HCT116 (cell line): ENCODE measurements at regions of chr7 and their contacts with region 1.

Region 1: GRCh38 chr7:78863281-78863680 is 590.2 kb downstream of the MAGI2 start:
- DNase-seq: no peak
- ATAC-seq: no peak
- H3K4me3 ChIP-seq: no peak overlapping the region
- H3K27ac ChIP-seq: no peak overlapping the region
- H3K4me1 ChIP-seq: no peaks in the 10 kb centered on the region
- H3K27me3 ChIP-seq: no peaks in the 10 kb centered on the region
- CTCF ChIP-seq: no peak
- POLR2A ChIP-seq: no peak
- RAD21 ChIP-seq: no peak

Region 2: DNA sequence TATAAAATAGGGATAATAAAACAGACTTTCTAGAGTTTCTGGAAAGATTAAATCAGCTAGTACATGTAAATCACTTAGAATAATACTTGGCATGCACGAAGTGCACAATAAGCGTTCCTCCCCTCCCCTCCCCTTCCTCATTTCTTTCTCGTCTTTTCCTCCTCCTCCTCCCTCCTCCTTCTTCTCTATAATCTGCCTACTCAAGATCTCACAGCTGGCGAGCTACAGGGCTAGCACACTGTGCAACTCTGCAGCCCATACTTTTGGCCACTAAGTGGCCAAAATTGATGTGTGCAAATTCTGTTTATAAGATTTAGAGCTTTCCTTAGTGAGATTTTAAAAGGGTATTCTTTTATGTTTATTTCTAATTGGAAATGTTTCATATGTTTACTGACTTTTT is 499.4 kb before region 1 on chr7:
- CTCF ChIA-PET with region 1: no interaction called
- POLR2A ChIA-PET with region 1: no interaction called
- RAD21 ChIA-PET with region 1: no interaction called
- intact Hi-C with region 1: loop called (anchors 5 kb)
- DNase-seq: no peak
- ATAC-seq: no peak
- H3K4me3 ChIP-seq: no peak overlapping the region
- H3K27ac ChIP-seq: no peak overlapping the region
- H3K4me1 ChIP-seq: no peaks in the 10 kb centered on the region
- H3K27me3 ChIP-seq: peaks cover 23% of the 10 kb centered on the region
- CTCF ChIP-seq: peak in 1 of 3 experiments; percentile 20; a peak in 2 of 6 replicates
- POLR2A ChIP-seq: no peak
- RAD21 ChIP-seq: no peak